Activated CD8-positive, alpha-beta T cell treated with anti-CD3 and anti-CD28 coated beads for 36 hours (primary cell): ENCODE measurements at regions of chr10 and their contacts with region 1.

Region 1: DNA sequence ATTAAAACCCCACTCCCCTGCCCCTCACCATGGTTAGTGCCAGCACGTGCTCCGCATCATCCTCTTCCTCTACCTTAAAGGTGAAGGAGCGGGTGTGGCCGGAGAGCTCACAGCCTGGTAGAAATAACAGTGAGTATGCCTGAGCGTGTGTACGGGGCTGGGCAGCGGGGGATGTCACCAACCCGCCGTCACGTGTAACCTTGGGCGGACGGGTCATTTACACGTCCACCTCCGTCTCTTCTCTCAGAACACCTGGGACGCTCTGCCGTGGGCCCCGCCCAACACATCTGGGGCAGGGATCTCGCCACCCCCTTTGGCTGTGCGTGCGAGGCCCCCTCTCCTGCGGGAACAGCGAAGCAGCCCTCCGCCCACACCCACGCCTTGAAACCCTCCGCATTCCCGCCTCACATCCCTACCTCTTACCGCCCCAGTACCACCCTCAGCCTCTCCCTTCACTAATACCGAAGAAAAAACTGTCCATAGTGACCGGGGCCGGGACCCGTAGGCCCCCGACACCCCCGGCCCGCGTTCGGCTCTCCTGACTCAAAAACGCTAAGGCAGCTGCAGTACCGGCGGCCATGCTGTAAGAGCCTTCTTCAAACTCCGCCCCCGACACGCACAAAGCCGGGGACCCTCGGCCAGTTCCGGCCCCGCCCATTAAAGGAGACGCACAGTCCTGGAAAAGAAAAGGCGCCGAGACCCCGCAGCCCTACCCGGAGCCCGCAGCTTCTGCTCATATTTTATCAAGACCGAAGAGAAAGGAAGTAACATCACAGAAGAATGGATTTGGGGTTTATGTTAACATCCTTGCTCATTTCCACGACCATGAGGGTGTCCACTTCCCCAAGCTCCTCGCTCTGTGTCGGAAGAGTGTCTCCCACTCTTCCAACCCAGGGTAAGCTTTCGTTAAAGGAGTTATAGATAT is at the start of gene NPM3:
- DNase-seq: peak; percentile 96
- ATAC-seq: peak; percentile 85
- H3K4me3 Mint-ChIP-seq: peak within 1 kb of the TSS; percentile 94
- H3K27ac Mint-ChIP-seq: peak within 1 kb of the TSS; percentile 95
- H3K4me1 Mint-ChIP-seq: peaks cover 42% of the 10 kb centered on the region
- H3K27me3 Mint-ChIP-seq: peaks cover 5% of the 10 kb centered on the region
- CTCF ChIP-seq: no peak
- total RNA-seq, gene NPM3: 235 to 264 TPM

Region 2: GRCh38 chr10:101587725-101588653 is 195.1 kb before region 1 on chr10 and contains the starts of genes DPCD and POLL:
- CTCF ChIA-PET with region 1: interaction called, 34 read pairs
- POLR2A ChIA-PET with region 1: interaction called, 4 read pairs
- intact Hi-C with region 1: no loop called
- DNase-seq: peak; percentile 98
- ATAC-seq: peak; percentile 97
- H3K4me3 Mint-ChIP-seq: peak within 1 kb of the TSS; percentile 93
- H3K27ac Mint-ChIP-seq: peak within 1 kb of the TSS; percentile 77
- H3K4me1 Mint-ChIP-seq: peaks cover 17% of the 10 kb centered on the region
- H3K27me3 Mint-ChIP-seq: no peaks in the 10 kb centered on the region
- CTCF ChIP-seq: no peak
- total RNA-seq, gene DPCD: 19.0 TPM
- total RNA-seq, gene POLL: 32.2 to 33.8 TPM

Region 3: DNA sequence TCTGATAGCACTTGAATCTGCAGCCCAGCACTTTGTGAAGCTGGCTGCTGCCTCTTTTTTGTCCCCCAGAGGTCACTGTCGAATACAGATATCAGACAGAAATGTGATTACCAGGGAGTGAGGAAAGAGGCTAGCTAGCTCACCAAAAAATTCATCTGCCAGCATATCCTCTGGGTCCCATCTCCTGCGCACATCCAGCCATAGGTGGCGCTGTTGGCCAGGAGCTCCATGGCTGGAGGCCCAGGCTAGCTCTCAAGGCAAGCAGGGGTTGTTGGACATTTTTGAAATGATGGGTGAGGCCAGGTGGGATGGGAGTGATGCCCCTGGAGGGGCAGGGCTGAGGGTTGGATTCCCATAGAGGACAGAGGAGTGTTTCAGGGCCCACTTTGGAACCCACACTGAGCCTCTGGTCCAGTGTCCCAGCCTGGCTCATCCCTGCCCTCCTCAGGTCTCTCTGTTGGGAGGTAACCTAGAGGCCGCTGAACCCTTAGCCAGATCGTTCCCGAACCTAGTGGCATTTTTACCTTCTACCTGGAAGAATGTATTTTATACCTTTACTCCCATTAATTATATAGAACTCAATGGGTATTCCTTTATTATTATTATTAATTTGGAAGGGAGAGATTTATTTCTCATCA is 180.2 kb before region 1 on chr10:
- CTCF ChIA-PET with region 1: interaction called, 180 read pairs
- POLR2A ChIA-PET with region 1: interaction called, 3 read pairs
- intact Hi-C with region 1: loop called (anchors 2 kb)
- DNase-seq: peak; percentile 89
- ATAC-seq: peak; percentile 96
- H3K4me3 Mint-ChIP-seq: no peak overlapping the region
- H3K27ac Mint-ChIP-seq: no peak overlapping the region
- H3K4me1 Mint-ChIP-seq: no peaks in the 10 kb centered on the region
- H3K27me3 Mint-ChIP-seq: no peaks in the 10 kb centered on the region
- CTCF ChIP-seq: peak; percentile 90

Region 4: DNA sequence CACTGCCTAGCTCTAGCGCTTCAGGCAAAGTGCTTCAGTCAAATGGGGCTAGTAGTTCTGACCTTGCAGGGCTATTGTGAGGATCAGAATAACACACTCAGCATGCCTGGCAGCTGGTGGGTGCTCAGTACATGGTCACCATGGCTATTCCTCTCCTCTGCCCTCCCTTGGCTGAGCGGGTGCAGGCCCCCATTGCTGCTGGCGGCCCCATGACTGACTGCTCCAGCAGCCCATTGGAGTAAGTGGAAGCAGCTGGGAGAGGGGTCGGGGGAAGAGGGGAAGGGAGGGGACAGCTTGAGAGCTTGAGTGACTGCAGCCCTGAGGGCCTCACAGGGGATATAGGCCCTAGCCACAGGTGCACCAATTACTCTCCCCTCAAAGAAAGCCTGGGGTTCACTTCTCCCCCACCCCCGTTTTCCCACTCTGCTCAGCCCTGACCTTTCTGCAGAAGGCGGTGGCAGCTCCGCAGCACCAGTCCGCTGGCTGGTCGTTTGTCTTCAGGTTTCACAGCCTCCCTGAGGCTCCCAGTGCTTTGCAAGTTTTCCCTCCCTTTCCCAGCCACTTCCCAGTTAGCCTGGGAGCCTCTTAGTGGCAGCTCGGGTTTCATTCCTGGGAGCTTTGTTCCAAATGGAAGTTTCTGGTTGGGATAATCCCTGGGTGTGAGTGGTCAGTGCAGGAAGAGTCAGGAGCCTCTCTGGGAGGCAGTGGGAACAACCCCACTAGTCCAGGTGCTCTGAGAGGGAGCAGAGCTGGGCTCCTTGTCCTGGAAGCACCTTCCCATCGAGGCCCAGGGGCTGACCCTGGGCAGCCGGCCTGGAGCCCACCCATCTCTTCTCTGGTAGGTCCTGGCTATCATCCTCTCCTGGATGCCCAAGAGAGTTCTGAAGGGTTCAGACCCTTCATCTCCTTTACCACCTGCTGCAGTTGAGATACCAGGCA is 23.5 kb before region 1 on chr10:
- CTCF ChIA-PET with region 1: no interaction called
- POLR2A ChIA-PET with region 1: no interaction called
- intact Hi-C with region 1: no loop called
- DNase-seq: no peak
- ATAC-seq: no peak
- H3K4me3 Mint-ChIP-seq: no peak overlapping the region
- H3K27ac Mint-ChIP-seq: no peak overlapping the region
- H3K4me1 Mint-ChIP-seq: no peaks in the 10 kb centered on the region
- H3K27me3 Mint-ChIP-seq: peaks cover 5% of the 10 kb centered on the region
- CTCF ChIP-seq: no peak

Region 5: GRCh38 chr10:101797403-101798059 is 14.5 kb after region 1 on chr10:
- CTCF ChIA-PET with region 1: interaction called, 33 read pairs
- POLR2A ChIA-PET with region 1: interaction called, 34 read pairs
- intact Hi-C with region 1: no loop called
- DNase-seq: no peak
- ATAC-seq: no peak
- H3K4me3 Mint-ChIP-seq: no peak overlapping the region
- H3K27ac Mint-ChIP-seq: peak overlapping the region; percentile 67
- H3K4me1 Mint-ChIP-seq: peaks cover 25% of the 10 kb centered on the region
- H3K27me3 Mint-ChIP-seq: no peaks in the 10 kb centered on the region
- CTCF ChIP-seq: no peak

Region 6: GRCh38 chr10:101818119-101818871 is 35.2 kb after region 1 on chr10 and contains the start of gene OGA:
- CTCF ChIA-PET with region 1: interaction called, 12 read pairs
- POLR2A ChIA-PET with region 1: interaction called, 53 read pairs
- intact Hi-C with region 1: loop called (anchors 5 kb)
- DNase-seq: peak; percentile 99
- ATAC-seq: peak; percentile 90
- H3K4me3 Mint-ChIP-seq: peak within 1 kb of the TSS; percentile 88
- H3K27ac Mint-ChIP-seq: peak within 1 kb of the TSS; percentile 96
- H3K4me1 Mint-ChIP-seq: peaks cover 34% of the 10 kb centered on the region
- H3K27me3 Mint-ChIP-seq: no peaks in the 10 kb centered on the region
- CTCF ChIP-seq: no peak
- total RNA-seq, gene OGA: 125 to 130 TPM

Region 7: DNA sequence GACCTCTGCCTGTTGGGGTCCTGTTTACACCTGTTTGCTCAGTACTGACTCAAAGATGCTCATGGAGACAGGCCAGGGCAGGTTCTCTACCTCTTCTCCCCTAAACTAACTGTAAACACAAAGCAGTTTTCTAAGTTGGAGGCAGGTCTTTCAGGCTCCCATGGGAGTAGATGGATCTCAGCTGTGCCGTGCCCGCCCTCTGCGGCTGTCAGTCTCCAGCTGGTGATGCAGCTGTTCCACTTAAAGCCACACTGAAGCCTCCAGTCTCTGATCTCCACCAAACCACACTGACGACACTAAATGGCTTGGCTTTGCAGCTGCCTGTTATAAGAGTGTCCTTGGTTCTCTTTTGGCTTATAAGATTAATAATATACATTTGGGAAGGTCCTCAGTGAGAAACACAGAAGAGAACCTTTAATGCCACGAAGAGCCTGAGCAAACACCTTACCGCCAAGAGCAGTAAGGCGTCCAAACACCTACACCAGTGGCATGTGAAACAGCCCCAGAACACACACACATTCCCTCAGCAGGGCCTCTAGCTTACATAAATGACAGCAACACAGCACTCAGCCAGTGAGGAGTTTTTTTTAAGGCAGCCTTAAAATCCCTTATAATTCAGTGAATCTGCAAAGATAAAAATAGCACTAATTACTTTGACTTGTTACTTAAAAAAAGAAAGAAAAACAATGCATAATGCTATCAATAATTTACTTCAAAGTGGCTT is 120.9 kb after region 1 on chr10:
- CTCF ChIA-PET with region 1: no interaction called
- POLR2A ChIA-PET with region 1: no interaction called
- intact Hi-C with region 1: no loop called
- DNase-seq: peak; percentile 62
- ATAC-seq: peak; percentile 84
- H3K4me3 Mint-ChIP-seq: no peak overlapping the region
- H3K27ac Mint-ChIP-seq: peak overlapping the region; percentile 47
- H3K4me1 Mint-ChIP-seq: peaks cover 25% of the 10 kb centered on the region
- H3K27me3 Mint-ChIP-seq: no peaks in the 10 kb centered on the region
- CTCF ChIP-seq: no peak